Ascending aorta (tissue), 2 donors: ENCODE measurements at regions of chr2 and their contacts with region 1.

Region 1: DNA sequence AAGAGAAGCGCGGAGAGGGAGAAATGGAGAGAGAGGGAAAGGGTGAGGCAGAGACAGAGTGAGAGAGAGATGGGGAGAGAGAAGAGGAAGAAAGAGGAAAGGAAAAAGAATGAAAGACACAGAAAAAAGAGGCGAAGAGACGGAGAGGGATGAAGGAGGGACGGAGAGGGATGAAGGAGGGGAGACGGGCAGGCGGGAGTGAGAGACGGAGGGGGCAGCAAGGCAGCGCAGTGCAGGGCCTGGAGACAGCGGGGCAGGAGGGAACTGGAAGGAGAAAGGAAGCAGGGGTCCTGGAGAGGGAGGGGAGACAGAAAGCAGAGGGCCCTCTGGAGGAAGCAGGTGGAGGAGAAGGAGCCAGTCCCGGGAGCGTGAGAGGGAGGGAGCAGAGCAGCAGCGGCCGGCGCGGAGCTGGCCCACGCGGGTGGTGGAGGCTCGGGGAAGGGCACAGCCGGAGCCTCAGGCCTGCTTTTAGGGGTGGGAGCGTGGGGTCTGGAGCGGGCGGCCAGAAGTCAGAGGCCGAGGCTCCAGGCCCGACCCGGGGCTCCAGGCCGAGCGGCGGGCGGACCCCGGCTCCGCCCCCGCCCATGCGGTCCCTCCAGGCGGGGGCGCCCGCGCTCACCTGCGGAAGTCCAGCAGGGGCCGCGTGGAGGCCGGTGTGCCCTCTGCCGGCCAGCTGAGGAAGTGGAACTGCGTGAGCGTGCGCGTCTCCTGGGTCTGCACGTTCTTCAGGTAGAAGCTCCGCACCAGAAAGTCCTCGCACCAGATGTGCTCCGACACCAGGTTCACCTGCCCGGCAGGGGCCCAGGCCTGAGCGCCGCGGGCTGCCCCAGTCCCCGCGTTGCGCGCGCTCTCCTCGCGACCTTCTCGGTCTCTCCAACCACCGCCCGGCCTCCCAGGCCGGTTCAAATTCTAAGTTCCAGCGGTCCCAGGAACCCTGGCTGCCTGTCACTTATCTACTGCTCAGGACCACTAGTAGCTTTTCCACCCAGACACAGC is 14.5 kb downstream of the PTPRN start:
- DNase-seq: peak in 1 of 2 donors; percentile 91
- H3K4me3 ChIP-seq: peak overlapping the region; percentile 62 to 67
- H3K27ac ChIP-seq: peak overlapping the region; percentile 83 to 86
- H3K4me1 ChIP-seq: peaks cover 0 to 16% of the 10 kb centered on the region in 2 donors
- H3K27me3 ChIP-seq: no peaks in the 10 kb centered on the region
- CTCF ChIP-seq: peak; percentile 97 to 99 (median 98)

Region 2: DNA sequence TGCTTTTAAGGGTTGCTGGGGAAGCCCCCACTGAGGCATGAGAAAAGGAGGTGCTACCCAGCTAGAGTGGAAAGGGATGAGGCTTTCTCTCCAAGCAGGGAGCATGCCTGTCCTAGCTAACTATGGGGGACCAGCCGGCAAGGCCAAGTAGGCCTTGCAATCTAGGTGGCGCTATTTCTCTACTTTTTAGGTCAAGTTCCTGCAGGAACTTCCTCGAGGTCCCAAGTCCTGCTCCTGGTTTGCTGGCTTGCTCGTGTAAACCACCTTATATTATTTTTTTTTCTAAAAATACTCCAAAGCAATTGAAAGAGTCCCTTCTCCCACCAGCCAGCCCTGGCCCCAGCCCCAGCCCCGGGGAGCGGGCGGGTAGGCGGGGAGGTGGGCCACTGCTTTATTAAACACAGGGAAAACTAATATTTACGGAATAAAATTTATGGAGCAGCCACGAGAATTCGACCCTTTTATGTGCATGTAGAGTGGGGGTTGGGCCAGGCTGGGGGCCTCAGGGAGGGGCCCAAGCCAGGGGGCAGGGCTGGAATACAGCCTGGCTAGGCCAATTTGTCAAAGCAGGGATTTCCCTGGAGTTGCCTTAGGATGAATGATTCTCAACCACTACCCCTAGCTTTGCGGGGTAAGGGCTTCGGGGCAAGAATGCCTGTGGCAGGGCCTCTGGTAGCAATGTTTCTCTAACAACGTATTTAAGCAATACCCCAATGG is 221.1 kb before region 1 on chr2:
- intact Hi-C with region 1: no loop called
- DNase-seq: no peak
- H3K4me3 ChIP-seq: no peak overlapping the region
- H3K27ac ChIP-seq: no peak overlapping the region
- H3K4me1 ChIP-seq: no peaks in the 10 kb centered on the region
- H3K27me3 ChIP-seq: no peaks in the 10 kb centered on the region
- CTCF ChIP-seq: peak in 1 of 3 experiments; percentile 46

Region 3: DNA sequence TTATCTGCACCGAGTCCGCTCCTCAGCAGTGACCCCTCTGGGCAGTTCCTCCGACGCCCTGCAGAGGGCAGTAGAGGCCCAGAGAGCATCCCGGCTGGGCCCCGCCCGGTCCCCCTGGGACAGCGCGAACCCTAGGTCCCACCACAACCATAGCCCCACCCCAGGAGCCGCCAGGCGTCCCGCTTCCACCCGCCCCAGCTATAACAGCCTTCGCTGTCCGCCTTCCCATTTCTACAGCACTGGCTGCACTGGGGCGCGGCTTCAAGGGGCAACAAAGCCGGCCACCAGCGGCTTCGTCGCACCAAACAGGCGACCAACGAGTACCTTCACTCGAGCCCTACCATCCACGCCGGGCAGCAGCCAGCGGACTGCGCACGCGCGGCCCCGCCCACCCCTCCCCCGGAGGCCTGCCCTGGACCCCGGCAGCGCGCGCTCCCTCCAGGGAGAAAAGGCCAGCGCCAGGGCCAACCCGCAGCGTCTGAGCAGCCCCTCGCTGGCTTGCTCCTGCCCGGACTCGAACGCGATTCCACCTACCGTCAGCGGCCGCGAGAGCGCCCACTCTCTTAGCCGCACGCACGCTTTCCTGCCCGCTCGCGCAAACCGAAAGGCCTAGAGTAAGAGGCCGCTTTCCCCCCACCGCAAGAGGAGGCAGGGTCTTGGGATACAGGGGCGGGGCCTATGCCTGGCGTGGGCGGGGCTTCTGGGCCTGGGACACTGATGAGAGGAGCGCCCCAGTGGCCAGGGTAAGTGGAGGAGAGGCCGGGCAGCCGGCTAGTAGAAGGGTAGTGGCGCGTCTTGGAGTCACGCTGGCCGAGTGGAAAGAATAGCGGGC is 134.3 kb before region 1 on chr2 and contains the start of gene NHEJ1:
- intact Hi-C with region 1: loop called (anchors 1 kb)
- DNase-seq: peak; percentile 88 to 98
- H3K4me3 ChIP-seq: peak within 1 kb of the TSS; percentile 66 to 86
- H3K27ac ChIP-seq: peak within 1 kb of the TSS; percentile 86 to 89
- H3K4me1 ChIP-seq: peaks cover 0 to 8% of the 10 kb centered on the region in 2 donors
- H3K27me3 ChIP-seq: no peaks in the 10 kb centered on the region
- CTCF ChIP-seq: peak; percentile 97 to 100 (median 100)
- total RNA-seq, gene NHEJ1: 21.6 TPM

Region 4: GRCh38 chr2:219177552-219178376 is 116.9 kb before region 1 on chr2 and contains the start of gene RETREG2:
- intact Hi-C with region 1: loop called (anchors 1 kb)
- DNase-seq: peak; percentile 34 to 93
- H3K4me3 ChIP-seq: peak within 1 kb of the TSS; percentile 91 to 99
- H3K27ac ChIP-seq: peak within 1 kb of the TSS; percentile 97 to 98
- H3K4me1 ChIP-seq: peaks cover 4 to 22% of the 10 kb centered on the region in 2 donors
- H3K27me3 ChIP-seq: no peaks in the 10 kb centered on the region
- CTCF ChIP-seq: peak in 2 of 3 experiments; percentile 11 to 19
- total RNA-seq, gene RETREG2: 83.5 TPM

Region 5: GRCh38 chr2:219245148-219245898 is 49.3 kb before region 1 on chr2 and contains the starts of genes GLB1L and STK16:
- intact Hi-C with region 1: loop called (anchors 1 kb)
- DNase-seq: peak; percentile 69 to 97
- H3K4me3 ChIP-seq: peak within 1 kb of the TSS; percentile 82 to 96
- H3K27ac ChIP-seq: peak within 1 kb of the TSS; percentile 96 to 99
- H3K4me1 ChIP-seq: peaks cover 20 to 40% of the 10 kb centered on the region in 2 donors
- H3K27me3 ChIP-seq: no peaks in the 10 kb centered on the region
- CTCF ChIP-seq: no peak
- total RNA-seq, gene GLB1L: 1.8 TPM
- total RNA-seq, gene STK16: 15.2 TPM

Region 6: GRCh38 chr2:219278655-219279516 is 15.8 kb before region 1 on chr2 and contains the start of gene DNAJB2:
- intact Hi-C with region 1: loop called (anchors 1 kb)
- DNase-seq: peak; percentile 98 to 99
- H3K4me3 ChIP-seq: peak within 1 kb of the TSS; percentile 87 to 95
- H3K27ac ChIP-seq: peak within 1 kb of the TSS; percentile 99
- H3K4me1 ChIP-seq: peaks cover 11 to 39% of the 10 kb centered on the region in 2 donors
- H3K27me3 ChIP-seq: no peaks in the 10 kb centered on the region
- CTCF ChIP-seq: peak in 1 of 3 experiments; percentile 7
- total RNA-seq, gene DNAJB2: 51.0 TPM

Region 7: GRCh38 chr2:219378163-219378851 is 83.7 kb after region 1 on chr2:
- intact Hi-C with region 1: no loop called
- DNase-seq: no peak
- H3K4me3 ChIP-seq: no peak overlapping the region
- H3K27ac ChIP-seq: no peak overlapping the region
- H3K4me1 ChIP-seq: no peaks in the 10 kb centered on the region
- H3K27me3 ChIP-seq: no peaks in the 10 kb centered on the region
- CTCF ChIP-seq: no peak

Region 8: DNA sequence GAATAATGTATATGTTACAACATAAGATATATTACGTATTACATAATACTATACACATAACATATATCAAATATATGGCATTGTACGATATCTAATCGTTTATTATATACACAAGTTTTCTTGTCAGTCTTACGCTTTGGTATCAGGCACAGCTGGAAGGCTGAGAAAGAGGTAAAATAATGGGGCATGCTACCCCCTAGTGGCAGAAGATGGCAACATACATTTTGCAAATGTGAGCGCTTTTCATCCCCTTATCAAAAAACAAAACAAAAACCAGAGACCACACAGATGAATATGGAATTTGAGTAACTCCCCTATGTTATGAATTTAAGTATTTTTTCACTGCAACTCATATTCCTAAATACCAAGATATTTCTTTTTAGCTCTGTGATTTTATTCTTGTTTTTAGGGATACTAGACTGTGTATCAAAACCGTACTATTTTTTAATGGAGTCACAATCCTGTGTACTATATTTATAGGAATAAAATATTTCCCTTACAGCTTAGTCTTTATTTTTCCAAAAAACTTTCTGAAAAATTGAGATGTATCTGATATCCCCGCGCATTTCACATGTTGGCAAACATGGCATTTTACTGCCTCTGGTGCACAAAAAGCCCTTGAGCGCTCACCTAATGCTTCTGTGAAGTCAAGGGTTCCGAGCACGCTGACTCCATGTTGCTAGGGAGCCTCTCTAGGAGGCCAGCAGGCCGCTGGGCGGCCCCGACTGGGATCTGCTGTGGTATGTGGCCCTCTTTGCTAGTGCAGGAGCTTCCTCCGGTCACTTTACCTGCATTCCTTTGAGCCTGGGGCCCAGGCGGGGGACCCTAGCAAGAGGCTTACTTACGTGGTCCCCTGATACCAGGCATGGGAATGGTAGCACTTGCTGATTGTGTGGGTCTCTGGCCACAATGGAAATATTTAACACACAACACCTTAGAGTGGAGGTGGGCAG is 395.3 kb after region 1 on chr2:
- intact Hi-C with region 1: no loop called
- DNase-seq: peak in 1 of 2 donors; percentile 72
- H3K4me3 ChIP-seq: peak overlapping the region in 1 of 2 donors; percentile 52
- H3K27ac ChIP-seq: peak overlapping the region; percentile 87 to 88
- H3K4me1 ChIP-seq: peaks cover 6 to 30% of the 10 kb centered on the region in 2 donors
- H3K27me3 ChIP-seq: no peaks in the 10 kb centered on the region
- CTCF ChIP-seq: peak; percentile 60 to 74 (median 72)